Activated T-helper 1 cell treated with anti-CD3 and anti-CD28 coated beads, Interleukin-12 subunit alpha, Interleukin-12 subunit beta, Interleukin-2, Interleukin-4 antibody, amounts not matched to agents 30 ng/mL and 10 ng/mL and 1 ng/mL, durations not matched to agents 14 hours and 24 hours and 36 hours (primary cell): ENCODE measurements at regions of chr1 and their contacts with region 1.

Region 1: DNA sequence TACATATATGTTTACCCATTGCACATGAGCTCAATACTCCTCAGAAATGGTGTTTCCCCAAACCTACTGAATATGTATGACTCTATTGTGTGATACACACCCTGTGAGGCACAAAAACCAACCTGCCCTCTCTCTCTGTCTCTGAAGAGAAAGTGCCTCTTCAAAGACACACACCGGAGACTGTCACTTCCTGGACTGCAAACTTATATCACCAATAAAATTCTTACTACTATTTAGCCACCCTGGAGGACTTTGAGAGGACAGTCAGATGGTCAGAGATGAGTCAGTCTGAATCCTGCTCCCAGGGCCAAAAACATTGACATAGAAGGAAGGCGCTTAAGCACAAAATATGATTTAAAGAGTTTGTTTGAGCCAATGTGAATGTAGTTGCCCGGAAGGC is 110.4 kb downstream of the PPIAL4G start:
- DNase-seq: peak; percentile 38
- H3K4me3 Mint-ChIP-seq: peak overlapping the region; percentile 78
- H3K27ac Mint-ChIP-seq: peak overlapping the region; percentile 98
- H3K4me1 Mint-ChIP-seq: peaks cover 28% of the 10 kb centered on the region
- H3K27me3 Mint-ChIP-seq: peaks cover 5% of the 10 kb centered on the region

Region 2: DNA sequence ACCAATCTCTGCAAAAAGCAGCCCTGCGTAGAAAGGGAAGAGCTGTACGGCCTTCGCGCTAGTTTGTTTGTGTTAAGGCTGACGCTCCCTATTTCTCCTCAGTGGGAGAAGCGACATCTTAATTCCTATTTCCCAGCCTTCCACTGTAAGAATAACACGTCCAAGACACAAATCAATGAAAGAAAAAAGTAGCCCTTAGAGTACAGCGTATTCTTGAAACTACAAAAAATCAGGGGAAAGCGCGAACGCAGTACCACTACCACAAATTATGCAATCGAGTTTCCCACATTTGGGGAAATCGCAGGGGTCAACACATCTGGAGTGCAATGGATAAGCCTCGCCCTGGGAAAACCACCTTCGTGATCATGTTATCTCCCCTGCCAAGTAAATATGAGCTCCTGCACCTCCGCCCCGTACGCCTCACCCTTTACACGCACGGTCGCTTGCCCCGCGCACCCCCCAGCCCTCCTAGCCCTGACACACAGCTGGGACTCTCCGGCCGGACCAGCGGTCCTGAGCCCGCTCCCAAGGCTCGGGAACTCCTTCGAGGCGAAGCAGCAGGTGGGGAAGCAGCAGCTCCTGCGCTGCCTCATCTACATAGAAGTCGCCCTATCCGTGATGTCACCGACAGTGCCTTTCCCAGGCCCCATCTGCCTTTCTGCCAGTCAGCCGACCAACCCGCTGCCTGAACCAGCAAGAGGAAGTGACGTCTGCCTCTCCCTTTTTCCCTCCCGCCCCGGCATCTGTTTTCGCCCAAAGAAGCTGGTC is 15.7 kb after region 1 on chr1:
- intact Hi-C with region 1: loop called (anchors 1 kb)
- DNase-seq: peak; percentile 83
- H3K4me3 Mint-ChIP-seq: peak overlapping the region; percentile 88
- H3K27ac Mint-ChIP-seq: peak overlapping the region; percentile 97
- H3K4me1 Mint-ChIP-seq: peaks cover 30% of the 10 kb centered on the region
- H3K27me3 Mint-ChIP-seq: no peaks in the 10 kb centered on the region